ENCODE measurements at regions of chr1 and their contacts with region 1.

Region 1: DNA sequence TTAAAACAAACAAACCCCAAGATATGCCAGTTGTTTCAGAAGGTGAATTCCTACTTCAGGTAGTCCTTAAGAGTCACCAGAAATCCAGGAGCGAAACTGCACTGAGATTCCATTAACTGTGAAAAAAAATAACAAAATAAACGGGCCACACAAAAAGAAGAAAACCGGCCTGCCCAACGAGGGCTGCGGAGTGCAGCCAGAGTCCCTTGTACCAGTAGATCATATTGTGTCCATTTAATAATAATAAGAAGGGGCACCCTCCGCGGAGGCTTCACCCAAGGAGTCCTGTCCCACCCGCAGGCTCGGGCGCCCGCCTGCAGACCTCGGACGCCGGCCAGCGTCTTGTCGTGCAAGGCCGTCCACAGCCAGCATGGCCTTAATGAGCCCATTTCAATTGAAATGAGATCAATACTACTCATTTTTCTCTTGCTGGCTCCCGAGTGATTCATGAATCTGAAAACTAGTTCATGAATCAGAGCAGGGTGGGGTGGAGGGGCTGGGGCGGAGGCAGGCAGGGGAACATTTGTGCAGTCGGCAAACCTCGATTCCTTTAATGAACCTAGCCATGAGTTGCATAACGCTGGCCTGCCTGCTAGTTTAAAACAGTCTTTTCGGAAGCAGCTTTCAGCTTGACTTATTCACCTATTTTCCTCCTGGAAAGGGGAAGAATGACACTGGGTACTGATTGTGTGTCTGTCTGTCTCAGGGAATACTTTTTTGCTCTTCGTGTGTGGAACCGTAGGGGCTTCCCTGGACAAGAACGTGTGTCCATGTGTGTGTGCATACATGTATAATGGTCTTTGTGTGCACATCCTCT is 113.1 kb upstream of the IRF2BP2 start:
- H3K4me3 ChIP-seq: peak overlapping the region; percentile 1
- H3K27ac ChIP-seq: peak overlapping the region; percentile 96
- H3K4me1 ChIP-seq: peaks cover 46% of the 10 kb centered on the region
- CTCF ChIP-seq: no peak

Region 2: DNA sequence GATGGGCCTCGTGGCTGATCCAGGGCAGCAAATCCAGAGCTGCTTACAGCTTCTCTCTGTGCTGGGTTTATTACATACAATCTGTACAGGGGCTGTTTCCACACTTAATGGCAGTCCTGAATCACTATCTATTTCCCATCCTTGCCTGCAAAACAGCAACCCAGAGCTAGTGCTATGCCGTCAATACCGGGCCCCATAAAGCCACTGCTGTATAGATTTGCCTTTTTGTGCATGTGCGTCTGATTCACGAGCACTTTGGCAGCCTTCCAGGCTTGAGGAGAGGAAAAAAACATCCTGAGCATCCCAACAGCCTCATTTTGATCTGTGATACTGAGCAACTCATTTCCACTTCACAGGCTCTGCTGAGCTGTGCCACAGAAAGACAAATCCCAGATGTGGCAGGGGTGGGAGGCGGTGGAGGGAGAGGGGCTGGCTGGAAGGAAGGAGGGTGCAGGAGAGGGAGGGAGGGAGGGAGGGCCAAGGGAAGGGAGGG is 179.0 kb before region 1 on chr1:
- CTCF ChIA-PET with region 1: interaction called, 3 read pairs
- POLR2A ChIA-PET with region 1: interaction called, 12 read pairs
- H3K4me3 ChIP-seq: no peak overlapping the region
- H3K27ac ChIP-seq: peak overlapping the region; percentile 87
- H3K4me1 ChIP-seq: peaks cover 23% of the 10 kb centered on the region
- CTCF ChIP-seq: no peak

Region 3: GRCh38 chr1:234599617-234600417 is 123.3 kb before region 1 on chr1:
- CTCF ChIA-PET with region 1: interaction called, 13 read pairs
- POLR2A ChIA-PET with region 1: interaction called, 16 read pairs
- H3K4me3 ChIP-seq: peak overlapping the region; percentile 45
- H3K27ac ChIP-seq: peak overlapping the region; percentile 96
- H3K4me1 ChIP-seq: peaks cover 52% of the 10 kb centered on the region
- CTCF ChIP-seq: peak; percentile 60; the same call in 1 of the 2 replicates

Region 4: DNA sequence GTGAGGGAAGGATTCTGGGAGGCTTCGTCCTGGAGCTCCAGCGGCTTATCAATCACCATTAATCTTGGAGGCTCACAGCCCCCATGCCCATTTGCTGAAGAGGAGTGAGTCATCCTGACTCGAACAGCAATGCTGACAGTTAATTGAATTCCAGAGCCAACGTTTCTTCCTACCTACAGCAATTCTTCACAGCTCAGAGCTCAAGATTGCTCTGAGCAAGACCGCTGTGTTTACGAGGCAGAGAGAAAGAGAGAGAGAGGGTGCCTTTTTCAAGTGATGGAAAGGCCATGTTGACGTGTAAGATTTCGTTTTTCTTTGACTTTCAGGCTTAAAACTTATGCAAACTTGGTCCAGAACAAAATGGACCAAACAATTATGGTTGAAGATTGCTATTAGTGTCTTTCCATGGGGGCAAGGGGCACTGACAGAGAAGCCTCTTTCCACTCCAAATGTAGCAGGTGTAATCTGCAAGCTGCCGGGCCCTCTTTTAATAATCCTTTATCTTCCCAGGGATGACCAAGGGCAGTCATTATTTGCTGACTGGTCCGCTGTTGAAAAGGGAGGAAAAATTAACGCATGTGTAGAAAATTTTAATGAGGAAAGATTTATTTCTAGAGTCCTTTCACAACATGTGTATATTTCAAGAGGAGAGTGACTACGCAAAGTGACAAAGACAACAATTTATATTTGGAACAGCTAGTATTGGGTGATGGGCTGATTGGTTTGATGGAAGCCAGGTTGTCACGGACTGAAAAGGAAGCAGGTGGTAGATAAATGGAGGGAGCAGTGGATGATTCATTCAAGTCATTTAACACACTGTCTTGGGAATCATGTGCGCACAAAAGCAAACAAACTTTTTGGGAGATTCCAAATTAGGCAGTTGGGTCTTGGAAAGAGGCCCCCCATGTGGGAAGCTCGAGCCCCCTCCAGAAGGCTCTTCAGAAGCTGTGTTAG is 23.0 kb after region 1 on chr1:
- CTCF ChIA-PET with region 1: interaction called, 8 read pairs
- POLR2A ChIA-PET with region 1: interaction called, 20 read pairs
- H3K4me3 ChIP-seq: no peak overlapping the region
- H3K27ac ChIP-seq: peak overlapping the region; percentile 60
- H3K4me1 ChIP-seq: peaks cover 33% of the 10 kb centered on the region
- CTCF ChIP-seq: no peak

Region 5: GRCh38 chr1:234772345-234773147 is 49.4 kb after region 1 on chr1:
- CTCF ChIA-PET with region 1: interaction called, 4 read pairs
- POLR2A ChIA-PET with region 1: interaction called, 20 read pairs
- H3K4me3 ChIP-seq: no peak overlapping the region
- H3K27ac ChIP-seq: peak overlapping the region; percentile 62
- H3K4me1 ChIP-seq: peaks cover 7% of the 10 kb centered on the region
- CTCF ChIP-seq: no peak

Region 6: DNA sequence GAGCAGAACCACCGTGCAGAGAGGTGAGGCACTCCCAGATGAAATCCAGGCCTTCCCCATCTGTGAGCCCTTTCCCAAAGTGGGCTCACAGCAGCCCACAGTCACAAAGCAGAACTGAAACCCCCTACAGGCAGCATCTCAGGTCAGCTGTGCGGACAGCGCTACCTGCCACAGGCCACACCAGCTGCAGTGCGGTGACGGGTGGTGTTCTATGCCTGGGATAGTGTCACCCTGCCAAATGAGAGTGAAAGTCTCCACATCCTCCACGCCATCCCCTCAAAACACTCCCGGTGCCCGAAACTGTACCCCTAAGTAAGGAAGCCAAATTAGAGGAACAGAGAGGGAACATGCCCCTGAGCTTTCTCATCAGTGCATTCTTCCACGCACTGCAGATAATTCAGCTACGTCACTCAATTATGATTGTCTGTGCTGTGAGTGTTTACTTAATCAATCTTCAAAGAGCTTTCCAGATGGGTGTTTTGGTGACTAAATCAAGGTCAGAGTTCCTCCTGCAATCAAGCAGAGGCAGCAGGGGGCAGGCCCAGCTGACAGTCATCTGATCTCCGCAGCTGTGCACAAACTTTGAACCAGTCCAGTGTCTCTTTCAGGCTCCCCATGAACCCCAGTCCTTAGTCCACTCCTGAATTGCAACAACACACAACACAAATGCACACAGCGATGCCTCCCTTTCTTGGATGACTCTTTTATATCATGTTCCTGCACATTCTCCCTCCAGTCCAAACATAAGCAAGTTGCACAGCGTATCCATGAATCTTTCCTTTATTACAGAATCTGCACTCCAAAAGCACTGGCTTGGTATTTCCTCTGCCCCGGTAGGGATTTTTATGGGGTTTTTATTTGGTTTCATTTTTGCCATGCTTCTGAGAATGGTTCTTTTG is 255.5 kb after region 1 on chr1:
- CTCF ChIA-PET with region 1: no interaction called
- POLR2A ChIA-PET with region 1: interaction called, 10 read pairs
- H3K4me3 ChIP-seq: no peak overlapping the region
- H3K27ac ChIP-seq: peak overlapping the region; percentile 56
- H3K4me1 ChIP-seq: peaks cover 41% of the 10 kb centered on the region
- CTCF ChIP-seq: peak; percentile 73

Region 7: DNA sequence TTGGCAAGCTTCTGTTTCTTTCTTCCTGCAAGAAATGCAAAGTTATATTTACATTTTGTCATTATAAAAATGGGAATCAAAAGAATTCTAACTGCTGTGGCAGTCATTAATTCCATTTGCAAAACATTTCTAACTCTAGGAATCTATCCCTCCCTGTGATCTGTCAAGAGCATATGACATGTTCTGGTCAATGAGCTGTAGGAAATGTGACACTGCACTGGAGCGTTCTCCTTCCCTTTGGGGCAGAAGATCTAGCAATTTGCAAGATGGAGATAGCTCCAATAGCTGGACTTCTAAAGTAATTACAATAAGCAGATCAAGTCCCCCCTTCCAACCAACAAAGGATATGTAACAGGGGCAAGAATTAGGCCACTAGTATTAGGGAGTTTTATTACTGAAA is 399.2 kb after region 1 on chr1:
- CTCF ChIA-PET with region 1: no interaction called
- POLR2A ChIA-PET with region 1: interaction called, 11 read pairs
- H3K4me3 ChIP-seq: no peak overlapping the region
- H3K27ac ChIP-seq: no peak overlapping the region
- H3K4me1 ChIP-seq: peaks cover 6% of the 10 kb centered on the region
- CTCF ChIP-seq: no peak

Measured in HEK293 (cell line).